ENCODE measurements at regions of chr3 and their contacts with region 1.

Region 1: GRCh38 chr3:58188173-58188564 is 22.6 kb downstream of the DNASE1L3 start:
- DNase-seq: no peak
- H3K4me3 Mint-ChIP-seq: no peak overlapping the region
- H3K27ac Mint-ChIP-seq: no peak overlapping the region
- H3K4me1 Mint-ChIP-seq: no peaks in the 10 kb centered on the region
- H3K27me3 Mint-ChIP-seq: no peaks in the 10 kb centered on the region

Region 2: DNA sequence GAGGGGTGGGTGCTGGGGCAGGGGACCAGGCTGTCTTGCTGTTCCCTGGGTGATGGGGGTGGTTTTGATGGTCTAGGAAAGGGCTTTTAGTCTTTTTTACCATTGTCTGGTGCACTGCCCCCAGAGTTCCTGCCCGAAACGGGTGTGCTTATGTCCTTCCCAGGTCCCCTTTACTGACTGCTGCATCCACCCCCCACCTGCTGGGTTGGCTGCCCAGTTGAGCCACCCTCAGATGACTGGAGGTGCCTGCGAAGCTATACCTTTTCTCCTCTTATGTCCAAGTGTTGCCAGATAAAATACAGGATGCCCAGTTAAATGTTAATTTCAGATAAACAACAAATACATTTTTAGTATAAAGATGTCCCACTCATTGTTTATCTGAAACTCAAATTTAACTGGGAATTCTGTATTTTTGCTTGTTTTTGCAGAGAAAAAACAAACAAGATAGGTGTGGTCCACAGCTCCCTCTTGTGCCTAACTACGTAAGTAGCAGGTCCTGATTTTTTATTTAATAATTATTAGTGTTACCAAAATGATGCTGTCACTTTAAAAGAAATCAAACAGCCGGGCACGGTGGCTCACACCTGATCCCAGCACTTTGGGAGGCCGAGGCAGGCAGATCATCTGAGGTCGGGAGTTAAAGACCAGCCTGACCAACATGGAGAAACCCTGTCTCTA is 111.8 kb after region 1 on chr3:
- CTCF ChIA-PET with region 1: interaction called, 41 read pairs
- POLR2A ChIA-PET with region 1: no interaction called
- DNase-seq: no peak
- H3K4me3 Mint-ChIP-seq: no peak overlapping the region
- H3K27ac Mint-ChIP-seq: no peak overlapping the region
- H3K4me1 Mint-ChIP-seq: peaks cover under 1% of the 10 kb centered on the region
- H3K27me3 Mint-ChIP-seq: peaks cover 22% of the 10 kb centered on the region